Endothelial cell of umbilical vein (primary cell): ENCODE measurements at regions of chr17 and their contacts with region 1.

Region 1: GRCh38 chr17:78082988-78083387 is 45.6 kb downstream of the TMC6 start:
- DNase-seq: no peak
- H3K4me3 ChIP-seq: no peak overlapping the region
- H3K27ac ChIP-seq: no peak overlapping the region
- H3K4me1 ChIP-seq: no peaks in the 10 kb centered on the region
- H3K27me3 ChIP-seq: no peaks in the 10 kb centered on the region
- CTCF ChIP-seq: no peak
- POLR2A ChIP-seq: no peak

Region 2: DNA sequence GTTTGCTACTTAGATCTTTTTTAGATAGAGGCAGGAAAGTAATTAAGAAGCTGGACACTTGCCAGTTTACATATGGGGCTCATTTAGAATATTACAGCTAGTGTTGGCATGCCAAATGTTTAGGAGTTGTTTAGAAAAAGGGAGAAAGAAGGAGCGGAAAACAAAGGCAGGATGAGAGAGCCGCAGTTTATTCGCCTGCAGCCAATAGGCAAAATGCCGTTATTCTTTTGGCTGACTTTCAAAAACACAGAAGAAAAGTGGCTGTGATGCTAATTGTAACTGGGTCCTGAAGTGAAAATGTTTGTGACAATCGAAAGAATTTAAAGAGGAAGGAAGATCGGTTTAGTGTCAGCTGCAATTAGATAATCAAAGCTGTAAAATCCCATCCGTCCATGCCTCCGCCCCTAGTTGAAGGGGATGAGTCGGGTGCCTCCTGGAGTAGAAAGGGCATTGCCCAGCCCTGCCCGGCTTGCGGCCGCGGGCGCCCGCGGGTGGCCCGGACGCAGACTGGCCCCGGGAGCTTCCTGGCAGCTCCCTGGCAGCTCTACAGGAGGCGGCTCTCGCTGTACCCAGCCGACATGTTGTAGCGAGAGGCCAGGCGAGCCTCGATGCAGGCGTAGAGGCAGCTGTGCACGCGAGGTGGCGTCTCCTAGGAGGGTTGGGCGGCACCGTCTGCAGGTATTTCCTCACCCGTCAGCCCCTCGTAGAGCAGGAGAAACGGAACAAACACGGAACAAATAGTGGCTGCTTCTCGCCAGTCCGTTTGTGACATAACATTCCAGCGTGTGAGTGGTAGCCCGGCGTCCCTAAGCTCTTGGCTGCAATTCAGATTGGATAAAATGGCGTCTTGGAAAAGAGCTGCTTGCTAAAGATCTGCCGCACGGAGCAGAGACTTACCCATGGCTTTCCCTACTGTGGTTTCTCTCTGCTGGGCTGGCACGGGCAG is 42.3 kb before region 1 on chr17:
- CTCF ChIA-PET with region 1: interaction called, 22 read pairs
- POLR2A ChIA-PET with region 1: interaction called, 3 read pairs
- dilution Hi-C with region 1: no loop called
- intact Hi-C with region 1: no loop called
- DNase-seq: peak; percentile 85
- H3K4me3 ChIP-seq: peak overlapping the region; percentile 11 to 79 (median 54)
- H3K27ac ChIP-seq: peak overlapping the region; percentile 87
- H3K4me1 ChIP-seq: peaks cover 21% of the 10 kb centered on the region
- H3K27me3 ChIP-seq: no peaks in the 10 kb centered on the region
- CTCF ChIP-seq: no peak
- POLR2A ChIP-seq: peak; percentile 92

Region 3: DNA sequence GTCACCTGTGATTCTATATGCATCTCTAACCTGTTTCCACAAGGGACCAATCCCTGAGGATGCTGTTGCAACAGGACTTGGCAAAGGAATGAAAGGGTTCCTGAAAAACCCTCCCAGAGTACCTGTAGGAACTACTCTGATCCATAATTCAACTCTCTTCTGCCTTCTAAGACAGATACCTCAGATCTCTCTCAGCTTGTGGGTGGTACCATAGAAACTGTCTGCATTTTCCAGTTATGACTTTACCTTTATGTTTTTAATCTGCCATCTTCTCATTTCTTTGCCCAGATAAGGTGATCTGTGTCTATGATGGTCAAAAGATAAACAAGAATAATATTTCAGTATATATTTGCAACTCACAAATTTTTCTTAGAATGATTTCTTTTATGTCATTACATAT is 19.5 kb before region 1 on chr17:
- CTCF ChIA-PET with region 1: interaction called, 17 read pairs
- POLR2A ChIA-PET with region 1: no interaction called
- dilution Hi-C with region 1: no loop called
- intact Hi-C with region 1: no loop called
- DNase-seq: no peak
- H3K4me3 ChIP-seq: no peak overlapping the region
- H3K27ac ChIP-seq: no peak overlapping the region
- H3K4me1 ChIP-seq: peaks cover 11% of the 10 kb centered on the region
- H3K27me3 ChIP-seq: no peaks in the 10 kb centered on the region
- CTCF ChIP-seq: no peak
- POLR2A ChIP-seq: no peak

Region 4: DNA sequence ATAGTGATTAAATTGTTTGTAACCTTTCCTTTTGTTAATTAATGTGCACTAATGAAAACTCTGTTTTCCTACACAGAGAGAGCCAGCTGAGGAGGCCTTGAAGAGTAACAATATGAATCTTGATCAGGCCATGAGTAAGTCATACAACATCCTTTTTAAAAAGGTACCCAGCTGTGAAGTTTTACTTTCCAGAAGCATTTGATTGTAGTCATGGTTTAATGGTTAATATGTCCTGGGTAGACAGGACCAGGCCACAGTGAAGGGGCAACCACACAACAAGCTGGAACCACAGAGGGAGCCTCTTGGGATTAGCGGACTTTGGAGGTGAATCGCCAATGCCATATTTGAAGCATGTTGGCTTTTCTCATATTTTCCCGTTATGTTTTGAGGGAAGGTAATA is 10.0 kb before region 1 on chr17:
- CTCF ChIA-PET with region 1: interaction called, 26 read pairs
- POLR2A ChIA-PET with region 1: no interaction called
- dilution Hi-C with region 1: no loop called
- intact Hi-C with region 1: no loop called
- DNase-seq: no peak
- H3K4me3 ChIP-seq: no peak overlapping the region
- H3K27ac ChIP-seq: no peak overlapping the region
- H3K4me1 ChIP-seq: no peaks in the 10 kb centered on the region
- H3K27me3 ChIP-seq: no peaks in the 10 kb centered on the region
- CTCF ChIP-seq: no peak
- POLR2A ChIP-seq: no peak

Region 5: DNA sequence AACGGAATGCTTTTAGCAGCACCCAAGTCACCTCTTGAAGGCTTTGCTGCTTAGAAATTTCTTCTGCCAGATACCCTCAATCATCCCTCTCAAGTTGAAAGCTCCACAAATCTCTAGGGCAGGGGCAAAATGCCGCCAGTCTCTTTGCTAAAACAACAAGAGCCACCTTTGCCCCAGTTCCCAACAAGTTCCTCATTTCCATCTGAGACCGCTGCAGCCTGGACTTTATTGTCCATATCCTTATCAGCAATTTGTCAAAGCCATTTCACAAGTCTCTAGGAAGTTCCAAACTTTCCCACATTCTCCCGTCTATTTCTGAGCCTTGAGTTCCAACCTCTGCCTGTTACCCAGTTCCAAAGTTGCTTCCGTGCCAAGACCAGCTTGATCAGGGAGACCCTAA is 18.1 kb after region 1 on chr17:
- CTCF ChIA-PET with region 1: interaction called, 37 read pairs
- POLR2A ChIA-PET with region 1: no interaction called
- dilution Hi-C with region 1: no loop called
- intact Hi-C with region 1: no loop called
- DNase-seq: no peak
- H3K4me3 ChIP-seq: no peak overlapping the region
- H3K27ac ChIP-seq: no peak overlapping the region
- H3K4me1 ChIP-seq: no peaks in the 10 kb centered on the region
- H3K27me3 ChIP-seq: no peaks in the 10 kb centered on the region
- CTCF ChIP-seq: no peak
- POLR2A ChIP-seq: no peak

Region 6: DNA sequence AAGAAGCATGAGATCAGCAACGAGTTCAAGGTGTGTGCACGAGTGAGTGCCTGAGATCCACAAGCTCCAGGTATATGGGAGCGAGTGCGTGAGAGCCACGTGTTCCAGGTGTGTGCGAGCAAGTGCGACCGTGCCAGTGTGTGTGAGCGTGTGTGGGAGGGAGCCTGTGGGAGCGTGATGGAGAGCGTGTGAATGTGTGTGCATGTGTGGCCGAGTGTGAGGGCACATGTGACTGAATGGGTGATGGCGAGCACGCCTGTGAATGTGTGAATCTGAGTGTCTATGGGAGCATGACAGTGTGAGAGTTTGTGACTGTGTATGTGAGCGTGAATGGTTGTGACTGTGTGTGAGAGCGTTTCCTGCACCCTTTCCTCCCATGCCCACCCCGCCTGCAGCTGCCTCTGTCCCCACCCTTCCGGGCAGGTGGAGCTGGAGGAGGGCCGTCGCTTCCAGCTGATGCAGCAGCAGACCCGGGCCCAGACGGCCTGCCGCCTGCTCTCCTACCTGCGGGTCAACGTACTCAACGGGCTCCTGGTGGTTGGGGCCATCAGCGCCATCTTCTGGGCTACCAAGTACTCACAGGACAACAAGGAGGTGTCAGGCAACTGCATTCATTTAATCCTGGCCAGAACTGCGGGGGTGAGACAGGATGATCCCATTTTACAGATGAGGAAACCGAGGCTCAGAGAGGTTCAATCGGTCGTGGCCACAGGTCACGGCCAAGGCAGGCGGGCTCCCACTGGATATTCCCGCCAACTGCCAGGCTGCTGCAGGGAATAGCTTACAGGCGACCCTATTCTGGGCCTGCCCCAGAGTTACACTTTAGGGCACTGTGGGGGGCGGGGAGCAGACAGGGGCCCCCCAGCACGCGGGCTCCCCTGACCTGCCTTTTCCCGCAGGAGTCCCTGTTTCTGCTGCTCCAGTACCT is 51.2 kb after region 1 on chr17:
- CTCF ChIA-PET with region 1: interaction called, 11 read pairs
- POLR2A ChIA-PET with region 1: no interaction called
- dilution Hi-C with region 1: no loop called
- intact Hi-C with region 1: no loop called
- DNase-seq: peak; percentile 52
- H3K4me3 ChIP-seq: no peak overlapping the region
- H3K27ac ChIP-seq: no peak overlapping the region
- H3K4me1 ChIP-seq: peaks cover 11% of the 10 kb centered on the region
- H3K27me3 ChIP-seq: no peaks in the 10 kb centered on the region
- CTCF ChIP-seq: peak; percentile 53 to 76
- POLR2A ChIP-seq: no peak

Region 7: DNA sequence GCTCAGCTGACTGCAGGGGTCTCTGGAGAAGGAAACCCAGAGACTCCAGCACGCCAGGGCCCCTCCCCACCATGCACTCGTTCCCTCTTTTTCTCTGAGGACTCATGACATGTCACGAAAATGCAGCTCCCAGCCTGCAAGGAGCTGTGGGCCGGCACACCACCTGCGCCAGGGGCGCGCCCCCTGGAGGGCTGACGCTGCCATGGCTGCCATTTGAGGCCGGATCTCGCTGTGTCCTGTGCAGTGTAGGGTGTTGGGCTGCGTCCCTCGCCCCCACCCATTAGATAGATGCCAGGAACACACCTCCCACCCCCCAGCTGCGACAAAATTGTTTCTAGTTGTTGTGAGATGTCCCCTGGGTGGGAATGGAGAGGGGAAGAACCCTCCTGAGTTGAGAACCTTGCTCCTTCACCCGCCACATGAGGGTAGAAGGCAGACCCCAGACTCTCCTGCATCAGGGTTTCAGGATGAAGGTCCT is 93.6 kb after region 1 on chr17:
- CTCF ChIA-PET with region 1: interaction called, 57 read pairs
- POLR2A ChIA-PET with region 1: no interaction called
- dilution Hi-C with region 1: no loop called
- intact Hi-C with region 1: loop called (anchors 1 kb)
- DNase-seq: peak; percentile 52
- H3K4me3 ChIP-seq: no peak overlapping the region
- H3K27ac ChIP-seq: no peak overlapping the region
- H3K4me1 ChIP-seq: peaks cover 8% of the 10 kb centered on the region
- H3K27me3 ChIP-seq: no peaks in the 10 kb centered on the region
- CTCF ChIP-seq: peak; percentile 96 to 98
- POLR2A ChIP-seq: no peak

Region 8: DNA sequence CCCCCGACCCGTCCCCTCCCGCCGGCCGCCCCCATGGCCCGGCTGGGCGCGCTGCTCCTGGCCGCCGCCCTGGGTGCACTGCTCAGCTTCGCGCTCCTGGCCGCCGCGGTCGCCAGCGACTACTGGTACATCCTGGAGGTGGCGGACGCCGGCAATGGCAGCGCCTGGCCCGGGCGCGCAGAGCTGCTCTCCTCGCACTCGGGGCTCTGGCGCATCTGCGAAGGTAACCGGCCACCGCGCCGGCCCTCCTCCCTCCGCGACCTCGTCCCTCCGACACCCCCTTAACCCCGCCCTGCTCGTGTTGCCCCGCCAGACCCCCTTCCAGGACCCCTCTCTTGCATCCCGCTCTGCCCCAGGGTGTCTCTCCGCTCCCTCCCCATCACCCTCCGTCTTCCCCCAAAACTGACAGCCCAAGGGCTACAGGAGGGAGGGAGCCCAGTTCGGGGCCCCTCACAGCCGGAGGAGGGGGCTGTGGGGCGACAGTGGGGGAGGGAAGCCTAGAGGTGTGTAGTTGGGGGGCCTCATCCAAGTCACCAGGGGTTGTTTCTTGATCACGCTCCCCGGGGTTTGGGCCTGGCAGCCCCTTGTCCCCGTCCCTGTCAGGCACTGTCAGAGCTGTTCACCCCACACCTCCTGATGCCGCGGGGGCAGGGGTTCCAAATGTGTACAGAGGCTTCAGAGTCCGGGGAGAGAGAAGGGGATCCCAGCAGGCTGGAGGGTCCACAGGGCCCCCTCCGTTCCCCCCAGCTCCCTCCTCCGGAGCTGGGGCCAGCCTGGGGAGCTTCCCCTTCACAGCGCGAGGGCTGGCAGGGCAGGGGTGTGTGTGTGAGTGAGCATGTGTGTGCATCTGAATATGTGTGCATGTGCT is 149.2 kb after region 1 on chr17:
- CTCF ChIA-PET with region 1: no interaction called
- POLR2A ChIA-PET with region 1: no interaction called
- dilution Hi-C with region 1: no loop called
- intact Hi-C with region 1: no loop called
- DNase-seq: no peak
- H3K4me3 ChIP-seq: no peak overlapping the region
- H3K27ac ChIP-seq: no peak overlapping the region
- H3K4me1 ChIP-seq: peaks cover 5% of the 10 kb centered on the region
- H3K27me3 ChIP-seq: peaks cover 21 to 25% of the 10 kb centered on the region in 2 experiments
- CTCF ChIP-seq: no peak
- POLR2A ChIP-seq: no peak